ENCODE measurements at regions of chr1 and their contacts with region 1.

Region 1: GRCh38 chr1:116485071-116485735 is 85.6 kb downstream of the CD58 start:
- DNase-seq: peak; percentile 77 to 93 (median 87)
- ATAC-seq: peak; percentile 95
- H3K4me3 ChIP-seq: no peak overlapping the region
- H3K4me3 Mint-ChIP-seq: no peak overlapping the region
- H3K27ac ChIP-seq: no peak overlapping the region
- H3K27ac Mint-ChIP-seq: no peak overlapping the region
- H3K4me1 ChIP-seq: no peaks in the 10 kb centered on the region
- H3K4me1 Mint-ChIP-seq: no peaks in the 10 kb centered on the region
- H3K27me3 ChIP-seq: no peaks in the 10 kb centered on the region
- H3K27me3 Mint-ChIP-seq: no peaks in the 10 kb centered on the region
- CTCF ChIP-seq: peak; percentile 87

Region 2: DNA sequence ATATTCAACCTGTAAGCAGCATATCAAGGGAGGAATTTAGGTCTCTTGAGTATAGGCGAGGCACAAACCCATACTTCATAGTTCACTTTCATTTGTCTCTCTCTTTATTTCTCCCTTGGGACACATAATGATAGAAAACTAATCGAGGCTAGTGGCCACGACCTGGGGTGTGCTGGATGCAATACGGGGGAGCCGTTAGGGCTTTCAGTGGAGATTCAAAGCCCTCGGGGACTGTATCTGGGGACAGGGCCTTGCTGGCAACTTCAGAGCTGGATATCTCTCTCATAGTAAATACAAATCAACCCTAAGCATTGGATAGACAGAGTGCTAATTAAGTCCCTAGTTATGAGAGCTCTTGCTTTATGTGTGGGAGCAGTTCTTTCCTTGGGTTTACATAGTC is 545.7 kb before region 1 on chr1:
- CTCF ChIA-PET with region 1: no interaction called
- POLR2A ChIA-PET with region 1: no interaction called
- intact Hi-C with region 1: no loop called
- DNase-seq: no peak
- ATAC-seq: no peak
- H3K4me3 ChIP-seq: no peak overlapping the region
- H3K4me3 Mint-ChIP-seq: no peak overlapping the region
- H3K27ac ChIP-seq: no peak overlapping the region
- H3K27ac Mint-ChIP-seq: no peak overlapping the region
- H3K4me1 ChIP-seq: no peaks in the 10 kb centered on the region
- H3K4me1 Mint-ChIP-seq: no peaks in the 10 kb centered on the region
- H3K27me3 ChIP-seq: no peaks in the 10 kb centered on the region
- H3K27me3 Mint-ChIP-seq: no peaks in the 10 kb centered on the region
- CTCF ChIP-seq: no peak

Region 3: GRCh38 chr1:116133696-116134650 is 351.2 kb before region 1 on chr1:
- CTCF ChIA-PET with region 1: interaction called, 618 read pairs
- POLR2A ChIA-PET with region 1: interaction called, 26 read pairs
- intact Hi-C with region 1: loop called (anchors 1 kb)
- DNase-seq: no peak
- ATAC-seq: no peak
- H3K4me3 ChIP-seq: no peak overlapping the region
- H3K4me3 Mint-ChIP-seq: no peak overlapping the region
- H3K27ac ChIP-seq: no peak overlapping the region
- H3K27ac Mint-ChIP-seq: no peak overlapping the region
- H3K4me1 ChIP-seq: peaks cover 6% of the 10 kb centered on the region
- H3K4me1 Mint-ChIP-seq: peaks cover 12% of the 10 kb centered on the region
- H3K27me3 ChIP-seq: no peaks in the 10 kb centered on the region
- H3K27me3 Mint-ChIP-seq: peaks cover 2% of the 10 kb centered on the region
- CTCF ChIP-seq: no peak

Region 4: DNA sequence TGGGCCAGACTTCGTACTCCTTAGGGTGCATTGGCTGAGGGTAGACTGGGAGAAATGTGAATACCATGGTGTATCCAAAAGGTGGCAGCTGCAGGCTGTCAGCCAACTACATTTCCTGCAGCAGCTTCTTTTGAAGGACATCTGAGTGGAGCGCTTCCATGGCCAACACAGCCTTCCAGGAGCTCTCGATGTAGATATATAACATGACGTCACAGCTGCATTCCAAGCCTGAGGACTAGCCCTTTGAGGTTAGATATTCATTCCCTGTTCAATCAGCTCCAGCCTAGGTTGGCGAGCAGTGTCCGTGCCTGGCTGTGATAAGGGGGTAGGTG is 266.2 kb before region 1 on chr1:
- CTCF ChIA-PET with region 1: interaction called, 25 read pairs
- POLR2A ChIA-PET with region 1: no interaction called
- intact Hi-C with region 1: no loop called
- DNase-seq: no peak
- ATAC-seq: no peak
- H3K4me3 ChIP-seq: no peak overlapping the region
- H3K4me3 Mint-ChIP-seq: no peak overlapping the region
- H3K27ac ChIP-seq: no peak overlapping the region
- H3K27ac Mint-ChIP-seq: no peak overlapping the region
- H3K4me1 ChIP-seq: no peaks in the 10 kb centered on the region
- H3K4me1 Mint-ChIP-seq: no peaks in the 10 kb centered on the region
- H3K27me3 ChIP-seq: no peaks in the 10 kb centered on the region
- H3K27me3 Mint-ChIP-seq: no peaks in the 10 kb centered on the region
- CTCF ChIP-seq: no peak

Region 5: DNA sequence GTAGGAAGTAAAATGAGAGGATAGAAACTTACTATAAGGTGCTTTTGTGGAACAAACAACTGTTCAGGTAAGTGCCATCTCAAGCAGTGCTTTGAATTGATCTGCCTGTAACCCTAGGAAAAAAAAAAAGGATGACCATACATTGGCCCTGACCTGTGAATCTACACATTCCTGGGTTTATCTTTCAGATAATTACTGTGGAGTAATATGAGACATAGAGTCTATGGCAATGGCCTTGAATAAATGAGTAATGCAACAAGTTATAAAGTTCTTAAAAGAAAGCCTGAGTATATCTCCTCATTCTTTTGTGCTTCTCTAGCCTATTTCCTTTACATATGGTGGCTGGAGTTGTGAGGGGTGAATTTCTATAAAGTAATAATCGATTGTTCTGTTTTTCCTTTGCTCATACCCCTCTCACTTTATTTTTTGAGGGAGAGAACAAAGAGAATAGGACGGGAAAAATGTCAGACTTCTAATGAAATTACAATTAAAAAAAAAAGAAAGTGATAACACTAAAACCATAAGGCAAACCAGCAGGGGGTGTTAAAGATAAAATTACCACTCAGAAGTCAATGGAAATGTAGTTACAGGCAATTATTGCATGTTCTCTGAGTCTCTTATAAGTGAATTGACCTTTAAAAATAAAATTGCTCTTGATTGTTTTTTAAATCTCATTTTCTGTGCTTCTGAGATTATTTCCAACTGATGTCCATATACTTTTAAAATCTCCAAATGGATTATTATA is 124.6 kb before region 1 on chr1:
- CTCF ChIA-PET with region 1: interaction called, 24 read pairs
- POLR2A ChIA-PET with region 1: no interaction called
- intact Hi-C with region 1: loop called (anchors 1 to 2 kb)
- DNase-seq: peak in 2 of 9 experiments; percentile 61 to 65
- ATAC-seq: no peak
- H3K4me3 ChIP-seq: no peak overlapping the region
- H3K4me3 Mint-ChIP-seq: no peak overlapping the region
- H3K27ac ChIP-seq: no peak overlapping the region
- H3K27ac Mint-ChIP-seq: no peak overlapping the region
- H3K4me1 ChIP-seq: peaks cover 9% of the 10 kb centered on the region
- H3K4me1 Mint-ChIP-seq: peaks cover 22% of the 10 kb centered on the region
- H3K27me3 ChIP-seq: no peaks in the 10 kb centered on the region
- H3K27me3 Mint-ChIP-seq: no peaks in the 10 kb centered on the region
- CTCF ChIP-seq: no peak

Region 6: DNA sequence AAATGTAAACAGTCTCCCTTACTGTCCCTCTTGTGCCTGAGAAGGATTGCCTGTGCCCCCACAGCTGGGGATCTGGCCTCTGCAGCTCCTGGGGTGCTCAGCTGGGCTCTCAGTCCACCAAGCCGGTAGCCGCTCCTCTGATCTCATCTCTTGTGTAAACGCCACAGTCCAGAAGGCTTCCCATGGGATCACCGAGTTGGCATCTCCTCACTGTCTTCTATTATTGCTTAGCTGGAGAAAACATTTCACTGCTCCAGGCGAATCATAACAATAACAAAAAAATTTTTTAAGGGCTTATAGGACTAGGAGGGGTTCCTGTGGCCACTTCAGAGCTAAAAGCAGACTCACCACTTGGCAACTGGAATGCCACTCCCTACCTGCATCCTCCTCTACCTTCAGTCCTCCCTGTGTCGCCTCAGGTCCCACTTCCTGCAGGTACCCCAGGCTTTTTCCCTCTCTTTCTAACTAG is 36.4 kb before region 1 on chr1:
- CTCF ChIA-PET with region 1: interaction called, 18 read pairs
- POLR2A ChIA-PET with region 1: no interaction called
- intact Hi-C with region 1: no loop called
- DNase-seq: no peak
- ATAC-seq: no peak
- H3K4me3 ChIP-seq: no peak overlapping the region
- H3K4me3 Mint-ChIP-seq: no peak overlapping the region
- H3K27ac ChIP-seq: no peak overlapping the region
- H3K27ac Mint-ChIP-seq: no peak overlapping the region
- H3K4me1 ChIP-seq: no peaks in the 10 kb centered on the region
- H3K4me1 Mint-ChIP-seq: no peaks in the 10 kb centered on the region
- H3K27me3 ChIP-seq: no peaks in the 10 kb centered on the region
- H3K27me3 Mint-ChIP-seq: peaks cover 8% of the 10 kb centered on the region
- CTCF ChIP-seq: no peak

Region 7: DNA sequence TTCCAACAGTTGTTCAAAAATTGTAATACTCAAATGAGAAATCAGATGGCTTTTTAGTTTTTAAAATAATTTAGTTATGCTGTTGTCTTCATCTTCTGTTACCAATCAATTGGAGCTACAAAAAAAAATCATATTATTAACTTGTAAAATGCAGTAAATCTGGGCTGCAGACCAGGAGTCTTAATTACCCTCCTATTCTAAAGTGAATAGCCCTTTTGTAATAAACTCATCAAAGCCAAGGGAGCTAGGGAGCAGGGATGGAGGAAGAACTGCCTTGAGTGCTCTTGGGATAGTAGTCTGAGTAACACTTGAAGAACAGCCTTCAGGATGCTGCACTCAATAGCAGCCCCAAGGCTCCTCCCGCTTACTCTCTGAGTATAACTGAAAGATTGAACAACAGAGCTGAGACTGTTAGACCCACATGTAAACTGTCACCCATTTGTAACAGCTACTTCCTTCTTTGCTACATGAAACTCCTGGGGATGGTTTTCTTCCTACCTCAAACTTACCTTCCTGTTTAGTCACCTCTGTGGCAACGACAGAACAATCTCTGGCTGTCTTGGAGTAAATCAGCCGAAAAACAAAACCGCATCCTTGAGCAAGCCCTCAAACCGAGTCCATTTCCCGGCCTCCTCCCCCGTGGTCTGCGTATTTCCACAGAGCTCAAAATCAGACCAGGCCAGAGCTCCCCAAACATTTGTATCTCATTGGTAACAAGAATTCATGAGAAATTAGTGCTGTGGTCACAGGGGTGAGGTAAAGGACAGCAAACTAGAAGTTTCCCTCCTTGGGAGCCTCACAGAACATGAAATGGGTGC is 29.7 kb after region 1 on chr1:
- CTCF ChIA-PET with region 1: interaction called, 12 read pairs
- POLR2A ChIA-PET with region 1: no interaction called
- intact Hi-C with region 1: no loop called
- DNase-seq: peak; percentile 28 to 89 (median 62)
- ATAC-seq: peak; percentile 83
- H3K4me3 ChIP-seq: peak overlapping the region; percentile 4 to 31
- H3K4me3 Mint-ChIP-seq: peak overlapping the region; percentile 61
- H3K27ac ChIP-seq: peak overlapping the region; percentile 50 to 96
- H3K27ac Mint-ChIP-seq: peak overlapping the region; percentile 94
- H3K4me1 ChIP-seq: peaks cover 29% of the 10 kb centered on the region
- H3K4me1 Mint-ChIP-seq: peaks cover 50% of the 10 kb centered on the region
- H3K27me3 ChIP-seq: no peaks in the 10 kb centered on the region
- H3K27me3 Mint-ChIP-seq: no peaks in the 10 kb centered on the region
- CTCF ChIP-seq: no peak